Kidney (tissue), 22 donors: ENCODE measurements at regions of chr22 and their contacts with region 1.

Region 1: DNA sequence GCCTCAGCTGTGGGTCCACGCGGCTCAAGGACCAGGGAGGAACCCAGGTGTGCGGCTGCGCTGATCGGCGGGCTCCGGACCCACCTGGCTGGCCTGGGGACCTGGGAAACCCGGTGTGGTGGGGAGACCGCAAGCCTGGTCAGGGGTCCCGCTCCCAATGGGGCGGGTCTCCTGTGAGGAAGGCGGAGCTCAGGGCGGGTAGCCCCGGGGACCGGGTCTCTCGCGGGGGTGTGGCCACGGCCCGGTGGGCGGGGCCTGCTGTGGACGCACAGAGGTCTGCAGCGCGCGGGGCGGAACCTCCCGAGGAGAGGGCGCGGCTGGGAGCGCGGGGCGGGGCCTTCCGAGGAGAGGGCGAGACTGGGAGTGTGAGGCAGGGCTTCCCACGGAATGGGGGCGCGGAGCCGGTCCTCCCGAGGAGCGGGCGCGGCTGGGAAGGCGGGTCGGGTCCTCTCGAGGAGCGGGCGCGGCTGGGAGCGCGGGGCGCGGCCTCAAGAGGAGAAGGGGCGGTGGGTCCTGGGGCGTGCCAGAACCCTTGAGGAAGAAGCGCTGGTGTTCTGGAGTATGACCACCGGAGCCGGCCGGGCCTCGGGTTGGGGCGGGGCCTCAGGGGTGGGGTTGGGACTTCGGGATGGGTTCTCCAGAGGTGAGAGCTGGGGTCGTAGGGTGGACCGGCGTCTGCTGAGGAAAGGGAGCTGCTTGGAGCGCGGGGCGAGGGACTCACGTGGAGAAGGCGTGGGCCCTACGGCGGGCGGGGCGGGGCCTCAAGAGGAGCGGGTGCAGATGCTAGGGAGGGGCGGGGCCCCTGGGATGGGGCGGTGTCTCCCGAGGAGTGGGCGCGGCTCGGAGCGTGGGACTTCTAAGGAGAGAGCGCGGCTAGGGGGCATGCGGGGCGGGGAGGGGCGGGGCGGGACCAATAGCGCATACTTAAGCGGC is 20.8 kb downstream of the DGCR6L start:
- DNase-seq: peak; percentile 90 to 96 (median 93)
- H3K4me3 ChIP-seq: peak overlapping the region in 1 of 3 donors; percentile 37
- H3K27ac ChIP-seq: no peak overlapping the region
- H3K4me1 ChIP-seq: peaks cover 0 to 4% (median 0%) of the 10 kb centered on the region in 3 donors
- H3K27me3 ChIP-seq: no peaks in the 10 kb centered on the region
- CTCF ChIP-seq: no peak

Region 2: DNA sequence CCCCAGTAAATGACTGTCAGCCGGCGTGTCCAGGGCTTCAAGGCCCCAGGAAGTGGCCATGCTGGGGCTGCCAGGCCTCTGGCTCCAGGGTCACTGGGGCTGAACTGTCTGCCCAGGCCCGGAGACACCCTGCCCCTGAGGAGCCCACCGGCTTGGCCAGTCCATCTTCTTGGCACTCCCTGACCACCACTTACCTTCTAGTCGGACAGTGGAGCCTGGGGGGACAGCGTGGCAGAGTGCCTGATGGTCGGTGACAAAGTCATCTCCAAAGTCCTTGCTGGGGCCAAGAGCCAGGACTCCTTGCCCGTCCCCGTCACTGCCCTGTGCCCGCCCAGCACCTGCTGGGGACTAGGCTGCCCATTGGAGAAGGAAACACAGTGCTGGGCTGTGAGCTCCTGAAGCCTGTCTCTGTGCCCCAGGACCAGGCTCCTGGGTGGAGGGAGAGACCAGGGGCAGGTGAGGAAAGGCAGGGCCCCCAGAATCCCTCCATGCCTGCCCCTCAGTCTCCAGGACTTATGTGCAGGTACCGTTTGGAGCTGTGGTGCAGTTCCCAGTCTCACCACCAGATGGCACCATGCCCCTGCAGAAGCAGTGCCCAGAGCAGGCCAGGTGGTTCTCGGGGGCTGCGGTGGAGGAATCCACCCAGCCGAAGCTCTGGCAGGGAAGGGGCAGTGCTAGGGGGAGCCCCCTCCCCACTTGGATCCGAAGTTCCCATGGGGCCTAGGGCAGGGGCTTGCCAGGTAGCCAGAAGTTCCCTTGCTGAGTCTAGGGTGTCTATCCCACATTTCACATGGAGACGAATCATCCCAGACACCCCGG is 142.2 kb before region 1 on chr22:
- intact Hi-C with region 1: loop called (anchors 10 kb)
- DNase-seq: peak; percentile 87 to 94 (median 89)
- H3K4me3 ChIP-seq: no peak overlapping the region
- H3K27ac ChIP-seq: no peak overlapping the region
- H3K4me1 ChIP-seq: no peaks in the 10 kb centered on the region
- H3K27me3 ChIP-seq: no peaks in the 10 kb centered on the region
- CTCF ChIP-seq: peak; percentile 99

Region 3: GRCh38 chr22:20792947-20793294 is 493.9 kb after region 1 on chr22:
- intact Hi-C with region 1: no loop called
- DNase-seq: no peak
- H3K4me3 ChIP-seq: no peak overlapping the region
- H3K27ac ChIP-seq: no peak overlapping the region
- H3K4me1 ChIP-seq: no peaks in the 10 kb centered on the region
- H3K27me3 ChIP-seq: no peaks in the 10 kb centered on the region
- CTCF ChIP-seq: no peak